WTC11 (cell line): ENCODE measurements at regions of chr1 and their contacts with region 1.

Region 1: GRCh38 chr1:108897865-108898720 is 21.3 kb downstream of the GPSM2 start:
- DNase-seq: no peak
- ATAC-seq: peak; percentile 53
- H3K4me3 Mint-ChIP-seq: no peak overlapping the region
- H3K27ac Mint-ChIP-seq: no peak overlapping the region
- H3K4me1 Mint-ChIP-seq: peaks cover 13% of the 10 kb centered on the region
- H3K27me3 Mint-ChIP-seq: no peaks in the 10 kb centered on the region
- CTCF ChIP-seq: peak; percentile 15; the same call in 1 of the 2 replicates

Region 2: DNA sequence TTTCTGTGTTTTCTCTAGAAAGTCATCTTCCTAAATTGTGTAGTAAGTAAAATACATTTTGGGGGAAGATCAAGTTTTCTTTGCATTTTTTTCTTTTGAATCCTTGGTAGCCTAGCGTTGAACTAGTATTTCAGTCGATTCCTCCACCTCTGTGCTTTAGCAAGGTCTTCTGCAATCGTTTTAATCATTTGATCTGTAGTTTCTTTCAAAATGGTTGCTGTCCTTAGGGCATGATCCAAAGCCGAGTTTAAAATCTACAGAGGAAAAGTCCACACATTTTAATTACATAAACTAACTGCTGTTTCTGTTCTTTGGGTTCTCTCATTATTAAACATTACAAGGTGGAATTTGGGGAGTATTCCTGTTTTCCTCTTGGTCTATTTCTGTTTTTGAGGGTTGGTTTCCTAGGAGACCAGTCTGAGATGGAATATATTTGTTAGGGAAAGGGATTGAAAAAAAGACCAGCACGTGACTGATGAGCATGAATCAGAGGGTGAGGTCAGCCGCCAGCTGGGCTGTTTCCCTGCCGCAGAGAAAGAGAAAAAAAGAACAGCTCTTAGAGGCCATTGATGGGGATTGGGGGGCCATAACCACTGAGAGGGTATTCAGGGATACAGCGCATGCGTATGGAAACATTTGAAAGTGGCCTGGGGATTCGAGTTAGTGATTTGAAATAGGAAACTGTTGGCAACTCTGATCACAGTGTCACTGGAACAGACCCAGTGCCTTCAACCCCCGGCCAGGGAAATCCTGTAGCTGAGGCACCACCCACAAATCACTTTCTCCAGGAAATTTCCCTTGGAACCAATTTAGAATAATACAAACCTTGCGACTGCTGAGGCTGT is 81.8 kb before region 1 on chr1:
- CTCF ChIA-PET with region 1: interaction called, 19 read pairs
- POLR2A ChIA-PET with region 1: no interaction called
- DNase-seq: peak; percentile 32
- ATAC-seq: peak; percentile 70
- H3K4me3 Mint-ChIP-seq: peak overlapping the region; percentile 3; the same call in 1 of the 2 replicates
- H3K27ac Mint-ChIP-seq: peak overlapping the region; percentile 52
- H3K4me1 Mint-ChIP-seq: peaks cover 35% of the 10 kb centered on the region
- H3K27me3 Mint-ChIP-seq: no peaks in the 10 kb centered on the region
- CTCF ChIP-seq: no peak

Region 3: GRCh38 chr1:108828022-108828961 is 69.8 kb before region 1 on chr1:
- CTCF ChIA-PET with region 1: interaction called, 14 read pairs
- POLR2A ChIA-PET with region 1: no interaction called
- DNase-seq: peak; percentile 69
- ATAC-seq: peak; percentile 90
- H3K4me3 Mint-ChIP-seq: no peak overlapping the region
- H3K27ac Mint-ChIP-seq: no peak overlapping the region
- H3K4me1 Mint-ChIP-seq: no peaks in the 10 kb centered on the region
- H3K27me3 Mint-ChIP-seq: no peaks in the 10 kb centered on the region
- CTCF ChIP-seq: peak; percentile 45; the same call in 1 of the 2 replicates

Region 4: DNA sequence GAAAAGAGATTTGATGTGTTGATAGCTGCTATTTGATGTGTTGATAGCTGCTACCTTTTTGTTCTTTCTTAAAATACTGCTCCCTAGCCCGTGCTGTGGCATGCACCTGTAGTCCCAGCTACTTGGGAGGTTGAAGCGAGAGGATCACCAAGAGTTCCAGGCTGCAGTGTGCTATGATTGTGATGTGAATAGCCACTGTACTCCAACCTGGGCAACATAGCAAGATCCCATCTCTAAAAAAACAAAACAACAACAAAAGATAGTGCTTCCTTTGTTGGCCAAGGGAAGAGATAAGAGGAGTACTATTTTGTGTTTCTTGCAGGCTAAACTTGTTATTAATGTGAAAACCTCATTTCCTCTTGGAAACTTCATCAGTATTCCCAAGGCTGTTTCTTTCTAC is 15.3 kb before region 1 on chr1:
- CTCF ChIA-PET with region 1: no interaction called
- POLR2A ChIA-PET with region 1: no interaction called
- DNase-seq: no peak
- ATAC-seq: no peak
- H3K4me3 Mint-ChIP-seq: no peak overlapping the region
- H3K27ac Mint-ChIP-seq: no peak overlapping the region
- H3K4me1 Mint-ChIP-seq: peaks cover 4% of the 10 kb centered on the region
- H3K27me3 Mint-ChIP-seq: peaks cover 2% of the 10 kb centered on the region
- CTCF ChIP-seq: no peak

Region 5: GRCh38 chr1:109397538-109398342 is 499.6 kb after region 1 on chr1 and contains the start of gene SORT1:
- CTCF ChIA-PET with region 1: no interaction called
- POLR2A ChIA-PET with region 1: no interaction called
- DNase-seq: peak; percentile 97
- ATAC-seq: peak; percentile 99
- H3K4me3 Mint-ChIP-seq: peak within 1 kb of the TSS; percentile 95
- H3K27ac Mint-ChIP-seq: peak within 1 kb of the TSS; percentile 97
- H3K4me1 Mint-ChIP-seq: peaks cover 43% of the 10 kb centered on the region
- H3K27me3 Mint-ChIP-seq: no peaks in the 10 kb centered on the region
- CTCF ChIP-seq: no peak
- total RNA-seq, gene SORT1: 50.2 to 60.8 TPM (median 55.9 TPM) in 3 replicates